ENCODE measurements at regions of chrX and their contacts with region 1.

Region 1: GRCh38 chrX:103817502-103817901 is 14.6 kb downstream of the RAB9B start:
- DNase-seq: peak in 11 of 42 donors; percentile 16 to 73 (median 37)

Region 2: GRCh38 chrX:103533511-103534216 is 283.8 kb before region 1 on chrX:
- intact Hi-C with region 1: loop called (anchors 10 kb)
- DNase-seq: peak; percentile 19 to 93 (median 82)

Region 3: GRCh38 chrX:103697687-103698086 is 119.8 kb before region 1 on chrX:
- intact Hi-C with region 1: no loop called
- DNase-seq: no peak

Region 4: DNA sequence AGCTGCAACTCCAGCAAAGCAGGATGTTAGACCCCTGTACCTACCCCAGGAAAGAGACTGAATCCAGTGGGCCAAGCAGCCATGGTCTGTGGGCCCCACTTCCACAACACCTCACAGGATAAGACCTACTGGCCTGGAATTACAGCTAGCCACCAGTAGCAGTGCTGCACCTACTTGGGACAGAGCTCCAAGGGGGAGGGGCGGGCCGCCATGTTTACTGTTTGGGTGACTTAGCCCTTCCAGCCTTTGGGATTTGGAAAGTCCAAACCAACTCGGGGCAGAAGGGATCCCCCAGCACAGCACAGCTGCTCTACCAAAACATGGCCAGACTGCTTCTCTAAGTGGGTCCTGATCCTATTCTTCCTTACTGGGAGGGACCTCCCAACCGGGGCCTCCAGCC is 135.9 kb after region 1 on chrX:
- intact Hi-C with region 1: no loop called
- DNase-seq: no peak